PC-3 (cell line): ENCODE measurements at regions of chr3 and their contacts with region 1.

Region 1: GRCh38 chr3:167032261-167032876 is 347.7 kb downstream of the ZBBX start:
- DNase-seq: peak; percentile 83
- ATAC-seq: peak; percentile 73
- H3K4me3 ChIP-seq: no peak overlapping the region
- H3K27ac ChIP-seq: no peak overlapping the region
- H3K4me1 ChIP-seq: no peaks in the 10 kb centered on the region
- H3K27me3 ChIP-seq: no peaks in the 10 kb centered on the region
- CTCF ChIP-seq: peak; percentile 85

Region 2: DNA sequence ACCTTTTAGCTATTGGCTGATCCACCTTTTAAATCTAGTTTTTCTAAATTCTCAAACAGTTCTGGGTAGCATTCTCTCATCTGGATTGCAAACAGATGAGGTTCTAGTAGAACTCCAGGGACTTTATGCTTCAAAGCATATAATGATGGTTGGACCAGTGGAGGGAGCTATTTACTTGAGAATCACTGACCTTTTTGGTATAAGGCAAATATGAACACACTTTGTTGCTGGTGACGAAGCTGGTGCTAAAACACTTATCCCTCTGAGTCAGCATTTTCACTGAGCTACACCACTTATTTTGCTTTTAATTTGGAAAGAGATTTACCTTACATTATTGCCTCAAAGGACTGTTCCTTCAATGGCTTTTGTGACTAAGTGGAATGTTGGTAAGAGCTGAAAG is 1777.6 kb before region 1 on chr3:
- CTCF ChIA-PET with region 1: no interaction called
- POLR2A ChIA-PET with region 1: no interaction called
- intact Hi-C with region 1: loop called (anchors 10 kb)
- DNase-seq: peak; percentile 69
- ATAC-seq: peak; percentile 89
- H3K4me3 ChIP-seq: no peak overlapping the region
- H3K27ac ChIP-seq: no peak overlapping the region
- H3K4me1 ChIP-seq: peaks cover 4% of the 10 kb centered on the region
- H3K27me3 ChIP-seq: no peaks in the 10 kb centered on the region
- CTCF ChIP-seq: peak; percentile 69

Region 3: GRCh38 chr3:165895918-165896317 is 1136.5 kb before region 1 on chr3:
- CTCF ChIA-PET with region 1: interaction called, 4 read pairs
- POLR2A ChIA-PET with region 1: no interaction called
- intact Hi-C with region 1: loop called (anchors 5 kb)
- DNase-seq: peak; percentile 51
- ATAC-seq: peak; percentile 60; the same call in 1 of the 2 replicates
- H3K4me3 ChIP-seq: no peak overlapping the region
- H3K27ac ChIP-seq: no peak overlapping the region
- H3K4me1 ChIP-seq: no peaks in the 10 kb centered on the region
- H3K27me3 ChIP-seq: no peaks in the 10 kb centered on the region
- CTCF ChIP-seq: peak; percentile 82

Region 4: GRCh38 chr3:166613365-166613764 is 419.0 kb before region 1 on chr3:
- CTCF ChIA-PET with region 1: no interaction called
- POLR2A ChIA-PET with region 1: no interaction called
- intact Hi-C with region 1: no loop called
- DNase-seq: no peak
- ATAC-seq: no peak
- H3K4me3 ChIP-seq: no peak overlapping the region
- H3K27ac ChIP-seq: no peak overlapping the region
- H3K4me1 ChIP-seq: 0 out of 2 replicates have a peak, but pooled peaks cover 2% of the 10 kb centered on the region
- H3K27me3 ChIP-seq: no peaks in the 10 kb centered on the region
- CTCF ChIP-seq: no peak

Region 5: GRCh38 chr3:166685246-166685645 is 347.1 kb before region 1 on chr3:
- CTCF ChIA-PET with region 1: no interaction called
- POLR2A ChIA-PET with region 1: no interaction called
- intact Hi-C with region 1: loop called (anchors 5 kb)
- DNase-seq: peak; percentile 47
- ATAC-seq: peak; percentile 74
- H3K4me3 ChIP-seq: no peak overlapping the region
- H3K27ac ChIP-seq: no peak overlapping the region
- H3K4me1 ChIP-seq: peaks cover 3% of the 10 kb centered on the region; the same call in 1 of the 2 replicates
- H3K27me3 ChIP-seq: no peaks in the 10 kb centered on the region
- CTCF ChIP-seq: peak; percentile 57

Region 6: GRCh38 chr3:166902374-166902773 is 130.0 kb before region 1 on chr3:
- CTCF ChIA-PET with region 1: no interaction called
- POLR2A ChIA-PET with region 1: no interaction called
- intact Hi-C with region 1: loop called (anchors 2 kb)
- DNase-seq: peak; percentile 23
- ATAC-seq: no peak
- H3K4me3 ChIP-seq: no peak overlapping the region
- H3K27ac ChIP-seq: no peak overlapping the region
- H3K4me1 ChIP-seq: no peaks in the 10 kb centered on the region
- H3K27me3 ChIP-seq: no peaks in the 10 kb centered on the region
- CTCF ChIP-seq: peak; percentile 53

Region 7: DNA sequence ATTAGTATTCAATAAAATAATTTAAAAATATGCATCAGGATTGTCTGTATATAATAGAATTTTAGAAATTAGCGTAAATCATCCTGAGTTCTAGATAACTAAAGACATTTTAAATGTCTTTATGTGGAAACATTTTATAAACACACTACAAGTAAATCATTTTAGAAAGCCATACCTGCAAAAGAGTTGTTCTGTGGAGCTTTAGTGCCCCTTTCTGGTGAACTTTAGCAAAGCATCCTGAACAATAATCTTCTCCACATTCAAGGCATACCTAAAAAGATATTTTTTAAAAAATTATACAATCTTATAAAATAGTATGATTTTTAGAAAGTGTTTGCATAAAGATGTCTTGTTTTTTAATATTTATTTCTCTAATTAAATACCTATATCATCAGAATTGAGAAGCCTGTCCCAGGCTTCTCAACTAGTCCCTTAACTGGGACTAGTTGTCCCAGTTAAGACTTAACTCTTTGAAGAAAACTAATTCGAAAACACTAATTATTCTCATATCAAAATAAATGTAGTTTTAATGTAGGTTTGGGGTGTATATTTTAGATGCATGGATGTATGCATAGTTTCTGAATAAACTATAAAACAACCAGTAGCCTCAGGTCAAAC is 318.0 kb after region 1 on chr3:
- CTCF ChIA-PET with region 1: no interaction called
- POLR2A ChIA-PET with region 1: no interaction called
- intact Hi-C with region 1: loop called (anchors 1 kb)
- DNase-seq: peak; percentile 59
- ATAC-seq: peak; percentile 40; the same call in 1 of the 2 replicates
- H3K4me3 ChIP-seq: no peak overlapping the region
- H3K27ac ChIP-seq: no peak overlapping the region
- H3K4me1 ChIP-seq: no peaks in the 10 kb centered on the region
- H3K27me3 ChIP-seq: no peaks in the 10 kb centered on the region
- CTCF ChIP-seq: peak; percentile 65